Left lung (tissue), 14 donors: ENCODE measurements at regions of chr17 and their contacts with region 1.

Region 1: DNA sequence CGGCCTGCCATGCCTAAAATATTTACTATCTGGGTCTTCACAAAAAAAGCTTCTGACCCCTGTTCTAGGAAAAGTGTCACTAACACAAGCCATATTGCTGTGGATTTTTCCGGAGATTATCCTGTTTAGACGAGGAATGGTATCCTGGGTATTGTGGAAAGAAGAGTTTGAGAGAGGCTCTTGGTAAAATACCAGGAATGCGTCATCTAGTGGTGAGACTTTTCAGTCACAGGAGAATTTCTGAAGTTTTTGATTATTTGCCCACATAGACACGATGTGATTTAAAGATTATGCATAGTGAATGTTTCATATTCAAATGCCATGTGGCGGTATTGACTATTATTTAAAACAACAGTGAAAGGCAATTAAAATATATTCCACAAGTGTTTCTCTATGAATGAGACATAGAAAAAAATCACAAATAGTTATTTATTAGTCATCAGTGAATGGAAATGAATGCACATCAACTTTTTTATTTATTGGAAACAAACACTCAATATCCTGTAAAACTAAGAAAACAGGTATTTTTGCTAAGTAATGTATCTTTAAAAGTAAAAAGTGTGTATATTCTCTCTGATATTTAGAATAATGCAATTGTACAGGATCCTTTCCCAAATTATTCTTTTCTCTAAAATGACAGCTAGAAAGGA is 7.8 kb downstream of the KRT28 start:
- DNase-seq: peak in 2 of 4 donors; percentile 59 to 67
- ATAC-seq: peak; percentile 65
- H3K4me3 ChIP-seq: no peak overlapping the region
- H3K27ac ChIP-seq: no peak overlapping the region
- H3K4me1 ChIP-seq: no peaks in the 10 kb centered on the region
- H3K27me3 ChIP-seq: peaks cover 0 to 24% of the 10 kb centered on the region in 2 donors
- CTCF ChIP-seq: peak in 1 of 2 donors; percentile 52

Region 2: DNA sequence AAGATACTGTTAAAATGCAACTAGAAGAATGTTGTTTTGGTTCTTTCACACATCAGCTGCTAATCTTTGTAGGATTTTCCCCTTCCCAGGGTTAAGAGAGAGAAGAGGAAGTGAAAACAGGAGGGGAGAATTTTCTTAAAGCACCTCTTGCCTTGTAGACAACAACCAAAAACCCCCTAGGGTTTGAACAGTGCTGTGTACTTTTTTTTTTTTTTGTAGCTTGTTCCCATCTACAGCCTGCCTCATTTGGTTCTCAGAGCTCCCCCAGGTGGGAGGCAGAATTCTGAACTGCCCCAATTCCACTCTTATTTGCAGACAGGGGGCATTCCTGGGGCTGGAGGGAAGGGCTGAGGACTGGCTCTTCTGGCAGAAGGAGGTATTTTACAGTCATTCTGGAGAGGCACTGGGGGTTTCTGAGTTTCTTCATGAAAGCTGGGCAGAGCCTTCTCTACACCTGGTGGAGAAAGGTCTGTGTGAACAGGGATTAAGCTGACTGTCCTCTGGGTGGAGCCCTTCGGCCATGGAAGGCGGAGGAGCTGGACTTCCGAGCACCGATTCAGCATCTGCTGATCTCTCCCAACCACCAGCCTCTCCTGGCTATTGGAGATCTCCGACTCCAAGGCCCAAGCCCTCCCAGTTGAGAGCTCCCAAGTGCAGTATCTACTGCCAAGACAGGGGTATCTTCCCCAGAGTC is 176.5 kb before region 1 on chr17:
- intact Hi-C with region 1: loop called in 1 of 2 experiments (anchors 5 kb)
- DNase-seq: peak in 3 of 4 donors; percentile 17 to 70 (median 50)
- ATAC-seq: peak; percentile 81
- H3K4me3 ChIP-seq: no peak overlapping the region
- H3K27ac ChIP-seq: no peak overlapping the region
- H3K4me1 ChIP-seq: peaks cover 5 to 26% of the 10 kb centered on the region in 2 donors
- H3K27me3 ChIP-seq: no peaks in the 10 kb centered on the region
- CTCF ChIP-seq: peak; percentile 26 to 29